ENCODE measurements at regions of chr16 and their contacts with region 1.

Region 1: DNA sequence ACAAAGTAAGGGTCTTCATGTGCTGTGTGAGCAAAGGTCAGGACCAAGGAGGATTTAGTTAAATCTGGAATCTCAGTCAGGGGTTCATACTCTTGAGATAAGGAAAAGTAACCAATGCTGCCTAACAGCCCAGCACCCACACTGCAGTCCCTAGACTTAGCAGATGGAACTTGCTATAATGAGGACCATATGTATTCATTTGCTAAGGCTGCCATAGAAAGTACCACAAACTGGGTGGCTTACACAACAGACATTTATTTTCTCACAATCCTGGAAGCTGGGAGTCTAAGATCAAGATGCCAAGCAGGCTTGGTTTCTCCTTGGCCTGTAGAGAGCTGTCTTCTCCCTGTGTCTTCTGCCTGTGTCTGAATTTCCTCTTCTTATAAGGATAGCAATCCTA is 20.8 kb downstream of the ZP2 start:
- DNase-seq: no peak
- H3K4me3 ChIP-seq: no peak overlapping the region
- H3K27ac ChIP-seq: no peak overlapping the region
- H3K27me3 ChIP-seq: peaks cover 7% of the 10 kb centered on the region
- CTCF ChIP-seq: no peak

Region 2: DNA sequence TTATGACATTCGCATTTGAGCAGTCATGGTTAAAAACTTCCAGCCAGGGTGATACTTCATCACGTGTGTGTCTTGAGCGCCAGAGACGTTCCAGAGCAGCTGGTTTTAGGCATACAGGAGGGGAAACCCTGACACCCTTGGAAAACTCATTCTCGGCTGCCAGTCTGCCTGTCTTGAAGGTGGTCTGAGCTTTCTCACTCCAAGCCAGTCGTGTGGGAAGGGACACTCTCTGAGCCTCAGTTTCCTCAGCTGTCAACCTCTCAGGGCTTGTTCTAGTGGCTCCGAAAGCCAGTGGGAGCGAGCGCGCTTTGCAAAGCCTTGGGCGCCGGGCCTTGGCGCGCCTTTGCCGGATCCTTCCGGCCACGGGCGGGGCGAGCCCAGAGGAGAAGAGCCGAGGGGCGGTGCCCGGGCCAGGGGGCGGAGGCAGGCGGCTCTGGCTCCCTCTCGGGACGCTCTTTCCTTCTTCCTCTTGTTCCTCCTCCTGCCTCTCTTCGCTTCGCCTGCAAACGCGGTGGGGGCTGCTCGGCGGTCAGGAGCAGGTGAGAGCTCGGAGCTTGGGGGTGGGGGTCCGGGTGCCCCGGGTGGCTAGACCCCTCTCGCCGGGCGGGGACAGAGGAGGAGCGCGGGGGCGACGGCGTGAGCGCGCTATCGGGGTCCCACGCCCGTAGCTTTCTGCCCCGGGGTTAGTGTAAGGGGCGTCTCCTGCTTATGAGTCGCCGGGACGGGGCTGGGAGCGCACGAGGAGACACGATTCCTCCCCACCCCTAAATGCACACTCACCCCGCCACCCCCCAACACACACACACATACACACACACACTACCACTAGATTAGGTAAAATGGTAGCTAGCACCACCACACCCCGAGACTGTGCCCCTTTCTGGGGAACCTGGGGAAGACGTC is 32.1 kb before region 1 on chr16 and contains the start of gene LDAF1:
- CTCF ChIA-PET with region 1: interaction called, 15 read pairs
- POLR2A ChIA-PET with region 1: no interaction called
- DNase-seq: no peak
- H3K4me3 ChIP-seq: peak within 1 kb of the TSS; percentile 77
- H3K27ac ChIP-seq: peak within 1 kb of the TSS; percentile 78
- H3K27me3 ChIP-seq: no peaks in the 10 kb centered on the region
- CTCF ChIP-seq: no peak
- polyA plus RNA-seq, gene LDAF1: 42.5 and 50.3 TPM in 2 replicates

Region 3: DNA sequence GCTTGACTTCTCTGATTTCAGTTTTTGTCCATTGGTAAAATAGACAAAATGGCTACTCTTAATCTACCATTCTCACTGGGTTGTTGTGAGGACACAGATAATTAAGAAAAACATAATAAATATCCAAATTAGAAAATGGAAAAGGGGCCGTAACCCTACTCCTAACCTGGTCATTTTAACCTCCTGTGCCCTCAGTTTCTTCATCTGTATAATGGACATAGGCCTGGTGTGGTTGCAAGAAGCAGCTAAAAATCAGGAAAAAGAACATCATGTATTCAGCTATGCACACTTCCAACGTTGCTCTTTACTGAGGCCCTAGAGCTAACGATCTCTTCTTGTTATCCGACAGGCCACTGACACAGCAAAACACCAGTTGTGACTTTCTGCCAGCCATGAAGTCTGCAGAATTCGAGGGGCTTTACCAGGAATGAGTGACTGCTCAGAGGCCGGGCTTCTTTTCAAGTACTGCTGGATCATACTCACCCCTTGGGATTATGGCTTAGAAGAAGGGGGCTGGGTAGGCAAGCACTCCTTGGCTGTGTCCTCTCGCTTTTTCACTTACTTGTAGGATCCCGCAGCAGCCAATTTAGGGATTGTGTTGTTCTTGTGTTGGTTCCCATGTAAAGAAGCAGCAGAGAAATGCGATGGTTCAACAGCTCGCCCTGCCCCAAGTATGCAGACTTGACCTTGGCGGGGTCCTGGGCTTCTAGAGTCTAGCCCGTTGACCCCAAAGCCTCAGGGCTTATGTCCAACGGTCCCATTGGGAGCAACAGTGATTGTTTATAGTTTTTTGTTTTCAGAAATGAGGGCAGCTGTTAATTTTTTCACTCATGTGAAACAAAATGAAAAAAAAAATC is 11.2 kb before region 1 on chr16:
- CTCF ChIA-PET with region 1: interaction called, 18 read pairs
- POLR2A ChIA-PET with region 1: no interaction called
- DNase-seq: no peak
- H3K4me3 ChIP-seq: no peak overlapping the region
- H3K27ac ChIP-seq: no peak overlapping the region
- H3K27me3 ChIP-seq: no peaks in the 10 kb centered on the region
- CTCF ChIP-seq: no peak

Region 4: DNA sequence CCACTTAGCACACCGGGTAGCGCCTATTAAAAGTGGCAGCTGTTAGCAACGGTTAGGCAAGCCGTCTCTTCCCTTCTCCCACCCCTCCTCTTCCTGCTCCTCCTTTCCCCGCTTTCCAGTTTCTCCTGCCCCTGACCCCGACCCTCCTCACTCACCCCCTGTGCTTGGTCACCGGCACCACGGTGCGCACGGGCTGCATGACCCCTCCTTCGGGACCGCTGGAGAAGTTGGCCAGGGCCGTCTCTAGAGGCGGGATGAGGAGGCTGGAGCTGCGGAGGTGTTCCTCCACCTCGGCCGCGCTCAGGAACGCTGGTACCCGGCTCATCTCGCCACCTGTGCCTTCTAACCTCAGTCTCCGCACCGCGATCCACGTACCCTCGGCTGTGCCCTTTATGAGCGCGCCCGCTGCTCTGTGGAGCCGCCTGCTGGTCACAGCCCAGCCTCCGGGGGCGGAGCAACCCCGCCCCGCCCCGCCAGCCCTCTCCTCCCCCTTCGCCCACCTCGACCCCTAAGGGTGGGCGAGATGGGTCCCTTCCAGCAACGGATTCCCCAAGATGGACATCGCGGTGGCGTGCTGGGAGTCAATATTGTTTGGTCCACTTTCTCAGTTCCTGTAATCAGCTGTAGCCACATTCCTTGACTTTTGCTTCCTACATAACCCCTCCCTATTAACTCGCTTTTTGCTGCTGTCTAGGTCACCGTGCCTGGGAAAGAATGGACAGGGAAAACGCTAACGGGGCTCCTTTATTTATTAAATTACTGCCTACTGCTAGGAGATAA is 87.5 kb after region 1 on chr16 and contains the start of gene CRYM:
- CTCF ChIA-PET with region 1: interaction called, 10 read pairs
- POLR2A ChIA-PET with region 1: no interaction called
- DNase-seq: no peak
- H3K4me3 ChIP-seq: peak within 1 kb of the TSS; percentile 54
- H3K27ac ChIP-seq: no peak within 1 kb of the TSS
- H3K27me3 ChIP-seq: peaks cover 58% of the 10 kb centered on the region
- CTCF ChIP-seq: peak; percentile 76
- polyA plus RNA-seq, gene CRYM: 0.12 and 0.21 TPM in 2 replicates

Region 5: DNA sequence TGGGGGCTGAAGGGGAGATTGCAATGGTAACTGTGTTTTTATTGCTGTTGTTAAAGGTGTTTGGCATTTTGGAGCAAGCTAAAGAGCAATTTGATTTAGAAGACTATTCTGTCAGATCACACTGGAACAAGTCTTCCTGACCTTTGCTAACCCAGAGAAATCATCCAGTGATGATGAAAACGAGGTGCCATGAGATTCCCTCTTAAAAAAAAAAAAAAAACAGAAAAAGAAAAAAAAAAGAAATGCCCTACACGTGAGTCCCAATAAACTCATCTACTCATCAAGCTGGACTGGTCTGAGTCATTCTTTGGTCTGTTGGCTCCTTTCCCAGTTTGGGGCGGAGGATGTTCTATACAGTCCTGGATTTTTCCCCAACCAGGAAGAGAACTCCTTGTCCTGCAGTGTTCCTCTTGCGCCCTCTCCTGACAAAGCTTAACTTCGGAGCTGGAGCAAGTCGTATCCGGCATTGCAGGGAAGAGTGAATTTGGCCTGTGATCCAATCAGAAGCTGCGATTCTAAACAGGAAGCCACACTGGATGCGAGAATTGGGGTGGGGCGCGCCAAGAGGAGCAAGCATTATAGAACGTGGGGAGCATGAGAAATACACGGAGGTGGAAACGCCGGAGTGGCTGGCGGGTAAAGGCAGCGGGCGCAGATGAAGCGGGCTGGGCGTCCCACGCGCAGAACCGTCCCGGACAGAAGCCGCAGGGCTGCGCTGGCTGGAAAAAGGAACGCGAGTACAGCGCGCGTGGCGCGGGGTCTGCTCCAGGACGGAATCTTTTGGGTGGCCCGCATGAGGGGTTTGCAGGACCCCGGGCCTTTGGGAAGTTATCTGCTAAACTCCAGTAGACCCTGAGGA is 109.9 kb after region 1 on chr16:
- CTCF ChIA-PET with region 1: interaction called, 74 read pairs
- POLR2A ChIA-PET with region 1: interaction called, 7 read pairs
- DNase-seq: peak; percentile 100
- H3K4me3 ChIP-seq: peak overlapping the region; percentile 79
- H3K27ac ChIP-seq: peak overlapping the region; percentile 59
- H3K27me3 ChIP-seq: no peaks in the 10 kb centered on the region
- CTCF ChIP-seq: peak; percentile 94